ENCODE measurements at regions of chr15 and their contacts with region 1.

Region 1: DNA sequence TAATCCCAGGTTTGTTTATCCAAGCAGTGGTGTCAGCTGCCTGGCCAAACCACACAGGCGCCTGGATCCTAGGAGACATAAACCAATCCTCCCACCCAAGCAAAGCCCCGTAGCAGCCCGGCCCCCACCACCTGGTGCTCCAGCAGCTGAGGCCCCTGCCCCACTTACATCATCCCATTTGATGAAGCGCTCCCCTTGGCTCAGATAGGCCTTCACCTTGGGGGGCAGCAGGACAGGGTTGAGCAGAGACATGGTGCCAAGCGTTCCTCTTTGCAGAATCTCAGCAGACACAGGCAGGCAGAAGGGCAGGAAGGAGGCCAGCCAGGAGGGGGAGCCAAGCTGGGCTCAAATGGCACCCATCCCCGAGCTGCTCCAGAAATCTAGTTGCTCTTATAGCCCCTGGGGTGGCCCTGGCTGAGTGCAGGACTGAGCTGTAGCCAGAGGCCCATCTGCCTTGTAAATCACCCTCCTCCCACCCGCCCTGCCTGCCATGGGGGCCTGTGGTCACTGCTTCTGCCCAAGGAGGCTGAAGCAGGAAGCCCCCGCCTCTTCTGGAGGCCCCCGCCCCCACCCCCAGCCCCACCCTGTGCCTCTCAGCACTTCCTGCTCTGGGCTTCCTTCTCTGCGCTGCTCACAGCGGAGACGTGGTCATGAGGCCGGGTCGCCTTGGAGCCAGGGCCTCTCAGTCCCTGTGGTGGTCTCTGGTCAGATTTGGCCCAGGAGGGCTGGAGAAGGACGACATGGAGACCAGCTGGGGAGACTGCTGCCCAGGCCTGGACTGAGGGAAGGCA is at the start of gene PLCB2:
- DNase-seq: peak; percentile 52 to 81 (median 65)
- H3K4me3 ChIP-seq: peak within 1 kb of the TSS; percentile 100
- H3K4me3 Mint-ChIP-seq: peak within 1 kb of the TSS; percentile 93 to 98 (median 97)
- H3K27ac ChIP-seq: peak within 1 kb of the TSS; percentile 85
- H3K27ac Mint-ChIP-seq: peak within 1 kb of the TSS; percentile 92 to 98 (median 94)
- H3K4me1 ChIP-seq: peaks cover 41% of the 10 kb centered on the region
- H3K4me1 Mint-ChIP-seq: peaks cover 47 to 57% (median 55%) of the 10 kb centered on the region in 3 donors
- H3K27me3 ChIP-seq: no peaks in the 10 kb centered on the region
- H3K27me3 Mint-ChIP-seq: no peaks in the 10 kb centered on the region
- total RNA-seq, gene PLCB2: 57.3 to 57.7 TPM

Region 2: GRCh38 chr15:40282144-40282868 is 25.3 kb before region 1 on chr15:
- CTCF ChIA-PET with region 1: interaction called, 258 read pairs
- POLR2A ChIA-PET with region 1: interaction called, 8 read pairs
- DNase-seq: peak; percentile 30 to 69 (median 44)
- H3K4me3 ChIP-seq: peak overlapping the region; percentile 64
- H3K4me3 Mint-ChIP-seq: peak overlapping the region; percentile 55 to 85 (median 64)
- H3K27ac ChIP-seq: no peak overlapping the region
- H3K27ac Mint-ChIP-seq: no peak overlapping the region
- H3K4me1 ChIP-seq: peaks cover 6% of the 10 kb centered on the region
- H3K4me1 Mint-ChIP-seq: peaks cover 3 to 9% (median 4%) of the 10 kb centered on the region in 3 donors
- H3K27me3 ChIP-seq: peaks cover 26% of the 10 kb centered on the region
- H3K27me3 Mint-ChIP-seq: peaks cover 7 to 33% of the 10 kb centered on the region in 2 donors

Region 3: GRCh38 chr15:40323239-40323952 is 15.8 kb after region 1 on chr15 and contains the start of gene INAFM2:
- CTCF ChIA-PET with region 1: interaction called, 121 read pairs
- POLR2A ChIA-PET with region 1: interaction called, 20 read pairs
- DNase-seq: peak; percentile 86 to 94 (median 90)
- H3K4me3 ChIP-seq: peak within 1 kb of the TSS; percentile 40
- H3K4me3 Mint-ChIP-seq: peak within 1 kb of the TSS; percentile 64 to 89 (median 83)
- H3K27ac ChIP-seq: peak within 1 kb of the TSS; percentile 39
- H3K27ac Mint-ChIP-seq: peak within 1 kb of the TSS; percentile 14 to 96 (median 68)
- H3K4me1 ChIP-seq: peaks cover 23% of the 10 kb centered on the region
- H3K4me1 Mint-ChIP-seq: peaks cover 22 to 42% (median 29%) of the 10 kb centered on the region in 3 donors
- H3K27me3 ChIP-seq: no peaks in the 10 kb centered on the region
- H3K27me3 Mint-ChIP-seq: peaks cover 0 to 3% of the 10 kb centered on the region in 2 donors
- total RNA-seq, gene INAFM2: 13.5 to 15.3 TPM

Region 4: GRCh38 chr15:40338041-40338657 is 30.5 kb after region 1 on chr15:
- CTCF ChIA-PET with region 1: interaction called, 189 read pairs
- POLR2A ChIA-PET with region 1: interaction called, 5 read pairs
- DNase-seq: peak; percentile 59 to 83 (median 62)
- H3K4me3 ChIP-seq: no peak overlapping the region
- H3K4me3 Mint-ChIP-seq: no peak overlapping the region
- H3K27ac ChIP-seq: no peak overlapping the region
- H3K27ac Mint-ChIP-seq: peak overlapping the region in 2 of 8 donors; percentile 38 to 54
- H3K4me1 ChIP-seq: peaks cover 23% of the 10 kb centered on the region
- H3K4me1 Mint-ChIP-seq: peaks cover 4 to 12% (median 7%) of the 10 kb centered on the region in 3 donors
- H3K27me3 ChIP-seq: no peaks in the 10 kb centered on the region
- H3K27me3 Mint-ChIP-seq: peaks cover 2 to 4% of the 10 kb centered on the region in 2 donors

Measured in CD8-positive, alpha-beta memory T cell (primary cell).